Activated CD4-positive, alpha-beta memory T cell treated with anti-CD3 and anti-CD28 coated beads for 36 hours (primary cell): ENCODE measurements at regions of chr6 and their contacts with region 1.

Region 1: DNA sequence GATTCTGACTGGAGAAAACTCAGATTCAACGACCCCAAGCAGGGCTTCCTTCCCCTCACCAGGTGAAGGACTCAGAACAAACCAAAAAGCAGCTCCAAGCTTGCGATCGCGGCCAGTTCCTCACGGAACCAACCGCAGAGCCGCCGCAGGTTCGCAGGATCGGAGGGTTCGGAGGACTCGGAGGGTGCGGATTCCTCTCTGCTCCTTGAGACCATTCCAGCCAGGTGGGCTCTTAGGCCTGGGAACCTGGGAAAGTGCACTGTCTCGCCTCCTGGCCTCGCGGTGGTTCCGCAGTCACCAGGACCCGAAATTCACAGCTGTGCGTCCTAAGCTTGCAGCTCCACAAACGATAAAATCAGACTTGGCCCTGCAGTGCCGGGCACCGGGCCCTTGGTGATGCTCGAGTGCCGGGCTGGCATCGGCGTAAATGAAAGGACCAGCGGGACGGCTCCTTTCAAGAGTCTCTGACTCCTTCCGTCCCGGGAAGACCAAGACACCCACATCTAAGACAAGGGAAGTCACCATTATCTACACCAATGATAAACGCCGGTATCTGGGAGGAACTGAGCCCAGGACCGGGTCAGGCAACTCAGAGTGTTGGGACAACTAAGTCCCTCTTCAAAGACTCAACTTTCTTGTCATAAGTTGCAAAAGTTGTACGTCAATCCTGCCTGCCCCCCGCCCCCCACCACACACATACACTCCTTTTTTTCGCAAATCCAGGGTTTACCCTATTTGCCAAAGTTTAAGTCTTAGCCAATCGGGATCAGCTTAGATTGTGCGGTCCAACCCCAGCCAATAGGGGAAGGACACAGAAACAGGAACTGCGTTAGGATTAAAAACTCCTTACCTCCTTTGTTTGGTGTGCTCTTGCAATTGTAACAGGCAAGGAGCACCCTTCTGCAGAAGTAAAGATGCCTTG is 69.8 kb upstream of the PRSS16 start:
- DNase-seq: peak; percentile 84
- H3K4me3 Mint-ChIP-seq: peak overlapping the region; percentile 88
- H3K27ac Mint-ChIP-seq: peak overlapping the region; percentile 88
- H3K4me1 Mint-ChIP-seq: peaks cover 10% of the 10 kb centered on the region
- H3K27me3 Mint-ChIP-seq: peaks cover 1% of the 10 kb centered on the region

Region 2: DNA sequence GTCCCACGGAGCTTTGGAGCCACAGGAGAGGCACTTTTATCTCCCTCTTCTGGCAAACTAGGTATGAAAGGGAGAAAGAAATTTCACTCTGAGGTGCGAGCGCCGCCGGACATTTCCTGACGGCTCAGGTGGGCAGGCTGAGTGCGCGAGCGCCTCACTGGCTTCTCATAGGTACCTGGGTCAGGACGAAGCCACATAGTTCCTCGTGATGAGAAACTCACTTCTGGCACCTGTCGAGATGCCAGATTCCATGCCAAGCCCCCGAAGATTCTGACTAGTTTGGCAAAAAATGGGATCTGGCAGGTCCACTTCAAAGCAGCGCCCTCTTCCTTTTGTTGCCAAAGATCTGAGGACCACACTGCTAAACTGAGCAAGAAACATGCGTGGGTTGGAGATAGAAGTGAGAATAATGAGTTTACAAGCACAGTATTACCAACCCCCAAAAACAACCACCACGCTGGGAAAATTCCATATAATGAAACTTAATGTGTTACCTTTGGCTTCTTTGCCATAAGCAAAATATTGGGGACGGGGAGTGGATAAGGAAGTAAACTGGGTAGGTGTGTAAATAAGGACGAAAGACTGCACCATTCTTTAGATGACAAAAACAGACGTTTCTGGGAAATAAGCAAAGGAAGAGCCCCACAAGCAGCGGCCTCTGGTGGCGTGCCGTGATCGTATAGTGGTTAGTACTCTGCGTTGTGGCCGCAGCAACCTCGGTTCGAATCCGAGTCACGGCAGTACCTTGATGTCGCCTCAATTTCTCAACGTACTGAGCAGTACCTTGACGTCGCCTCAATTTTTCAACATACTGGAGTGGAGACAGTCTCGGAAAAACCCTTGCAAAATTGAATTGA is 20.1 kb before region 1 on chr6:
- CTCF ChIA-PET with region 1: interaction called, 9 read pairs
- POLR2A ChIA-PET with region 1: interaction called, 3 read pairs
- intact Hi-C with region 1: loop called (anchors 2 kb)
- DNase-seq: peak; percentile 91
- H3K4me3 Mint-ChIP-seq: peak overlapping the region; percentile 66
- H3K27ac Mint-ChIP-seq: peak overlapping the region; percentile 77
- H3K4me1 Mint-ChIP-seq: peaks cover 45% of the 10 kb centered on the region
- H3K27me3 Mint-ChIP-seq: no peaks in the 10 kb centered on the region

Region 3: DNA sequence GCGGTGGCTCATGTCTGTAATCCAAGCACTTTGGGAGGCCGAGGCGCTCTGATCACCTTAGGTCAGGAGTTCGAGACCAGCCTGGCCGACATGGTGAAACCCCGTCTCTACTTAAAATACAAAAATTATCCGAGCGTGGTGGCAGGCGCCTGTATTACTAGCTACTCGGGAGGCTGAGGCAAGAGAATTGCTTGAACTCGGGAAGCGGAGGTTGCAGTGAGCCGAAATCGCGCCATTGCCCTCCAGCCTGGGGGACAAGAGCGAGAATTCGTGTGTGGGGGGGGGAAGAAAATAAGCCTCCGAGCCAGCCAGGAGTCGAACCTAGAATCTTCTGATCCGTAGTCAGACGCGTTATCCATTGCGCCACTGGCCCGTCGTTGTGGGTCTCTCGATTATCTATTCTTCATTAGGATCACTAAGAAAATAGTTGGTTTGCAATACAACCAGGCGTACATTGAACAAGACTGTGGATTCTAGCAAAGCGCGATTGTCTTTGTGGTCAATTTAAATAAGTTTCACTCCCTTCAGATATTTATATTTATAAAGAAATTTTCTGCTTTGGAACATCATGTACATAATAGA is 35.9 kb after region 1 on chr6:
- CTCF ChIA-PET with region 1: no interaction called
- POLR2A ChIA-PET with region 1: no interaction called
- intact Hi-C with region 1: no loop called
- DNase-seq: peak; percentile 14
- H3K4me3 Mint-ChIP-seq: no peak overlapping the region
- H3K27ac Mint-ChIP-seq: no peak overlapping the region
- H3K4me1 Mint-ChIP-seq: no peaks in the 10 kb centered on the region
- H3K27me3 Mint-ChIP-seq: peaks cover 51% of the 10 kb centered on the region

Region 4: GRCh38 chr6:27312146-27312949 is 134.6 kb after region 1 on chr6 and contains the start of gene POM121L2:
- CTCF ChIA-PET with region 1: no interaction called
- POLR2A ChIA-PET with region 1: no interaction called
- intact Hi-C with region 1: loop called (anchors 1 kb)
- DNase-seq: peak; percentile 78
- H3K4me3 Mint-ChIP-seq: peak within 1 kb of the TSS; percentile 74
- H3K27ac Mint-ChIP-seq: no peak within 1 kb of the TSS
- H3K4me1 Mint-ChIP-seq: peaks cover 5% of the 10 kb centered on the region
- H3K27me3 Mint-ChIP-seq: peaks cover 53% of the 10 kb centered on the region
- total RNA-seq, gene POM121L2: not detected

Region 5: GRCh38 chr6:27503436-27504030 is 325.8 kb after region 1 on chr6:
- CTCF ChIA-PET with region 1: no interaction called
- POLR2A ChIA-PET with region 1: no interaction called
- intact Hi-C with region 1: loop called (anchors 2 kb)
- DNase-seq: peak; percentile 86
- H3K4me3 Mint-ChIP-seq: peak overlapping the region; percentile 88
- H3K27ac Mint-ChIP-seq: peak overlapping the region; percentile 85
- H3K4me1 Mint-ChIP-seq: peaks cover 26% of the 10 kb centered on the region
- H3K27me3 Mint-ChIP-seq: peaks cover 10% of the 10 kb centered on the region

Region 6: DNA sequence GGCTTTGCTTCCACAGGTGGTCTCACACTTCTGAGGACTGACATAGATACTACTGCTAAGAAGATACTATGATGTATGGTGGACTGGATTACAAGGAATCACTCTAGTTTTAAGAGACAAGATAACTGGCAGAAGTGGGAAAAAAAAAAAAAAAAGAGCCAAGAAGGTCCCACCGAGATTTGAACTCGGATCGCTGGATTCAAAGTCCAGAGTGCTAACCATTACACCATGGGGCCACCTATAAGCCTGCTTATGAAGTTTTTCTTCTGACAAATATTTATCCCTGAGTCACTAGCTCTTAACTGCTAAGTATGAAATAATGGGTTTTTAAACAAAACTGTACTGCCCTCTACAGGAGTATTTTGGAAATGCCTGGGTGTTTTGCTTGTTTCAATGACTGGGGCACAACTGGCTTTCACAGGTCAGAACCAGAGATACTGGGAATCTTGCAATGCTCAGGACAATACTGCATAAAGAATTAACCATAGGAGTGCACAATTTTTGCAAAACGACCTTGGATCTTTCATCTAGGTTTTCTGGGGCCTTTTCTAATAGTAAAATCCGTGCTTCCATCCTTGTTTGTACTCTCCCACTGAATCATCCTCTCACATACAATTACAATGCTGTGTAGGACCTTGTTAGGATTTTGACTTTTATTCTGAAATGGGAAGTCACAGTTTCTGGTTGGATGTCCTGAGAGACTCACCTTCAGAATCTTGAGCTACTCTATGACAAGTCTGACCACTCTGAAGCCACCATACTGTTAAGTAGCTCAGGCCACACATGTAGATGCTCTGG is 618.1 kb after region 1 on chr6:
- CTCF ChIA-PET with region 1: interaction called, 22 read pairs
- POLR2A ChIA-PET with region 1: no interaction called
- intact Hi-C with region 1: loop called (anchors 1 kb)
- DNase-seq: peak; percentile 39
- H3K4me3 Mint-ChIP-seq: no peak overlapping the region
- H3K27ac Mint-ChIP-seq: peak overlapping the region; percentile 67
- H3K4me1 Mint-ChIP-seq: peaks cover 22% of the 10 kb centered on the region
- H3K27me3 Mint-ChIP-seq: peaks cover 8% of the 10 kb centered on the region